ENCODE measurements at regions of chr21 and their contacts with region 1.

Region 1: GRCh38 chr21:26490771-26491170 is 82.3 kb downstream of the CYYR1 start:
- DNase-seq: no peak
- ATAC-seq: no peak
- H3K4me3 ChIP-seq: no peak overlapping the region
- H3K27ac ChIP-seq: no peak overlapping the region
- H3K4me1 ChIP-seq: no peaks in the 10 kb centered on the region
- H3K27me3 ChIP-seq: no peaks in the 10 kb centered on the region
- CTCF ChIP-seq: no peak
- POLR2A ChIP-seq: no peak

Region 2: DNA sequence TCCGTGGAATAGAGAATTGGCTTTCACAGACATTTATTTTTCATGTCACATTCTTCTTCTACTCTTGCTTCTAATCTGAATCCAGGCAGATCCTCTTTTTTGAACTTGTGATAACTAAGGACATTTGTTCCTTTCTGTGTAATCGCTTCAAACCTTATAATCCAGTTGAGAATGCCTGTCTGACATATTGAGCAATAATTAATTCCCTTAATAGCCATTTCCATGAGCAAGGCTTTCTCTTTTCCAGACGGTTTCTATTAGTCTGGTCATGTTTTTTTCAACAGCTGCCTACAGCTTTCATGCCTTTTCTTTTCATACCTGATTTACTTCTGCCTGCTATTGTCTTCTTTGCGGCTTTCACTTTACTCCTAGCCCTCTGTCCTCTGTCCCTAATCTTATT is 81.0 kb before region 1 on chr21:
- in situ Hi-C with region 1: loop called in 1 of 4 experiments (anchors 10 kb)
- intact Hi-C with region 1: no loop called
- DNase-seq: no peak
- ATAC-seq: peak in 1 of 2 donors; percentile 33
- H3K4me3 ChIP-seq: no peak overlapping the region
- H3K27ac ChIP-seq: no peak overlapping the region
- H3K4me1 ChIP-seq: no peaks in the 10 kb centered on the region
- H3K27me3 ChIP-seq: no peaks in the 10 kb centered on the region
- CTCF ChIP-seq: no peak
- POLR2A ChIP-seq: no peak

Region 3: DNA sequence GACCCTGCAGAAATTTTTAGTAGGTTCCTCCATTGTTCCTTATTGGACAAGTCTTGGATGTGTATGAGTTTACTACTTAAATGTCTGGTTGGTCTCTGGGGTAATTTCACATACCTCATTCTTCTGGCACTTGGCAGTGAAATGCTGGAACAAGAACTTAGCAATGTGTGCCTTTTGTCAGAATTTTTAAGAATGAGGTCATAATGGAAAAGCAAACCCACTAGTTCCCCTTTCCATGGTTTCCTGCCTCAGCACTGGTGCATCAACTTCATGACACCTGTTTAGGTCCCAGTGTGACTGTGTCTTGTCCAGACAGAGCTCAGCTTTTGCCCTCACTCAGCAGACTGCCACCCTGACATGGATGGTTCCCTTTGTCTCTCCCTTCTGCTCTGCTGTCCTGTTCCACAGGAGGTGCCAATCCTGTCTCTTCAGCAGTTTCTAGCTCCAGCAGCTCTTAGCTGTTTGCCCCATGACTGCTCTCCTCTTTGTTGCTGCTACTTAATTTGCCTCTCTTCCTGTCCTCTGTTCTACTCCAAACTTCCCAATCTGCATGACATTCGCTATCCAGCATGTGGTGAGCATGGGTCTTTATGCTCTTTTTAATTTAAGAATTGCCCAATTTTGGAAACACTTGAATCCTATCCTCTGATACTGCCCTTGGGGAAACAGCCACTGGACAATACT is 53.3 kb before region 1 on chr21:
- in situ Hi-C with region 1: no loop called
- intact Hi-C with region 1: no loop called
- DNase-seq: no peak
- ATAC-seq: no peak
- H3K4me3 ChIP-seq: no peak overlapping the region
- H3K27ac ChIP-seq: no peak overlapping the region
- H3K4me1 ChIP-seq: no peaks in the 10 kb centered on the region
- H3K27me3 ChIP-seq: no peaks in the 10 kb centered on the region
- CTCF ChIP-seq: no peak
- POLR2A ChIP-seq: no peak